Activated B cell treated with CpG ODN at 0.5 μM for 24 hours (primary cell): ENCODE measurements at regions of chr10 and their contacts with region 1.

Region 1: GRCh38 chr10:49407552-49408137 is 11.8 kb upstream of the DRGX start:
- DNase-seq: peak; percentile 45
- ATAC-seq: peak; percentile 49
- H3K4me3 Mint-ChIP-seq: no peak overlapping the region
- H3K27ac Mint-ChIP-seq: no peak overlapping the region
- H3K4me1 Mint-ChIP-seq: no peaks in the 10 kb centered on the region
- H3K27me3 Mint-ChIP-seq: peaks cover 44% of the 10 kb centered on the region
- CTCF ChIP-seq: no peak

Region 2: GRCh38 chr10:49512121-49512809 is 104.6 kb after region 1 on chr10:
- CTCF ChIA-PET with region 1: interaction called, 21 read pairs
- POLR2A ChIA-PET with region 1: no interaction called
- intact Hi-C with region 1: loop called (anchors 1 kb)
- DNase-seq: no peak
- ATAC-seq: peak; percentile 42
- H3K4me3 Mint-ChIP-seq: no peak overlapping the region
- H3K27ac Mint-ChIP-seq: no peak overlapping the region
- H3K4me1 Mint-ChIP-seq: peaks cover 20% of the 10 kb centered on the region
- H3K27me3 Mint-ChIP-seq: no peaks in the 10 kb centered on the region
- CTCF ChIP-seq: no peak

Region 3: GRCh38 chr10:49518982-49519578 is 111.4 kb after region 1 on chr10:
- CTCF ChIA-PET with region 1: interaction called, 18 read pairs
- POLR2A ChIA-PET with region 1: no interaction called
- intact Hi-C with region 1: loop called (anchors 1 kb)
- DNase-seq: no peak
- ATAC-seq: peak; percentile 66
- H3K4me3 Mint-ChIP-seq: no peak overlapping the region
- H3K27ac Mint-ChIP-seq: no peak overlapping the region
- H3K4me1 Mint-ChIP-seq: peaks cover 7% of the 10 kb centered on the region
- H3K27me3 Mint-ChIP-seq: no peaks in the 10 kb centered on the region
- CTCF ChIP-seq: no peak

Region 4: GRCh38 chr10:50224330-50224952 is 816.8 kb after region 1 on chr10:
- CTCF ChIA-PET with region 1: no interaction called
- POLR2A ChIA-PET with region 1: no interaction called
- intact Hi-C with region 1: loop called (anchors 5 kb)
- DNase-seq: no peak
- ATAC-seq: peak; percentile 69
- H3K4me3 Mint-ChIP-seq: no peak overlapping the region
- H3K27ac Mint-ChIP-seq: no peak overlapping the region
- H3K4me1 Mint-ChIP-seq: no peaks in the 10 kb centered on the region
- H3K27me3 Mint-ChIP-seq: peaks cover 9% of the 10 kb centered on the region
- CTCF ChIP-seq: no peak